ENCODE measurements at regions of chrX and their contacts with region 1.

Region 1: DNA sequence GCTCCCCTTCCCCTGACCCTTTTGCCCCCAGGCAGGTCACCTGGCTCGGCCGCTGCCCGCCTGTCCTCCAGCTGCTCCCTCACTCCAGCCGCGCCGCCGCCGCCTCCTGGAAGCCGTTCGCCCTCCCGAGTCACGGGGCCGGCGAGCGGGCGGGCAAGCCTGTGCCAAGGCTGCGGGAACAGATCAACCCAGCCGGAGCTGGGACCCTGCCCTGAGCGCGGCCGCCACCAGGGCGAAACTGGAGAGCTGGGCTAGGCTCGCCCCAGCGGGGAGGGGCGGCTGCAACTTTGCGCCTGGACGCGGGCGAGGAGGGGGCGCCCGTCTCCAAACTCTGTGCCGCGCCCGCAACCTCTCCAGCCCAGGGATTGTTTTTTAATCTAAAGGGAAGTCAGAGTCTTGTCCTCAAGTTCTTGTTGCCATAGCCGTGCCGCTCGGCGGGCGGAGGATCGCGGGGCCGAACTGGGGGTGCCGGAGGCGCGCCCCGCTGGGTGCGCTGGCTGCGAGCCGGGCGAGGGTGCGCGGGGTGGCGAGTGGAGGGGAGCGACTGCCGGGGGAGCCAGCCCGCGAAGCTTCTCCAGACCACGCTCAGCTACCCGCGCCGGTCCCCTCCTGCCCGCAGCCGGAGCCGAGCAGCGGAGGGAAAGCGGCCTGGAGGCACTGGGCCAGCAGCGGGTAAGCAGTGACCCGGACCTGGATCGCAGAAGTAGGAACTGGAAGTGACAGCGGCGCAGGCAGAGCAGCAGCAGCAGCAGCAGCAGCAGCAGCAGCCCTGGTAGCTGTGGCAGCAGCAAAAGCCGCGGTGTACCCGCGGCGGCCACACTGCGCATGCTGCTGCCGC is 13.4 kb downstream of the ARHGEF6 start:
- DNase-seq: peak; percentile 26 to 72
- ATAC-seq: peak; percentile 83 to 90 (median 90)
- H3K4me3 ChIP-seq: peak overlapping the region; percentile 42
- H3K4me3 Mint-ChIP-seq: peak overlapping the region; percentile 82
- H3K27ac ChIP-seq: peak overlapping the region; percentile 49
- H3K27ac Mint-ChIP-seq: peak overlapping the region; percentile 59 to 63
- H3K4me1 ChIP-seq: peaks cover 22% of the 10 kb centered on the region
- H3K4me1 Mint-ChIP-seq: peaks cover 18 to 24% of the 10 kb centered on the region in 2 donors
- H3K27me3 ChIP-seq: no peaks in the 10 kb centered on the region
- H3K27me3 Mint-ChIP-seq: no peaks in the 10 kb centered on the region
- CTCF ChIP-seq: no peak

Region 2: GRCh38 chrX:136725446-136726104 is 41.7 kb before region 1 on chrX:
- intact Hi-C with region 1: no loop called
- DNase-seq: no peak
- ATAC-seq: no peak
- H3K4me3 ChIP-seq: no peak overlapping the region
- H3K4me3 Mint-ChIP-seq: no peak overlapping the region
- H3K27ac ChIP-seq: no peak overlapping the region
- H3K27ac Mint-ChIP-seq: peak overlapping the region in 1 of 2 donors; percentile 82
- H3K4me1 ChIP-seq: peaks cover 3% of the 10 kb centered on the region
- H3K4me1 Mint-ChIP-seq: peaks cover 5 to 21% of the 10 kb centered on the region in 2 donors
- H3K27me3 ChIP-seq: no peaks in the 10 kb centered on the region
- H3K27me3 Mint-ChIP-seq: no peaks in the 10 kb centered on the region
- CTCF ChIP-seq: no peak

Region 3: GRCh38 chrX:136856551-136856950 is 89.2 kb after region 1 on chrX:
- intact Hi-C with region 1: loop called (anchors 10 kb)
- DNase-seq: no peak
- ATAC-seq: no peak
- H3K4me3 ChIP-seq: no peak overlapping the region
- H3K4me3 Mint-ChIP-seq: no peak overlapping the region
- H3K27ac ChIP-seq: no peak overlapping the region
- H3K27ac Mint-ChIP-seq: peak overlapping the region in 1 of 2 donors; percentile 6
- H3K4me1 ChIP-seq: no peaks in the 10 kb centered on the region
- H3K4me1 Mint-ChIP-seq: peaks cover 0 to 19% of the 10 kb centered on the region in 2 donors
- H3K27me3 ChIP-seq: no peaks in the 10 kb centered on the region
- H3K27me3 Mint-ChIP-seq: no peaks in the 10 kb centered on the region
- CTCF ChIP-seq: no peak